ENCODE measurements at regions of chr1 and their contacts with region 1.

Region 1: GRCh38 chr1:6082430-6082971 is 36.8 kb downstream of the KCNAB2 start:
- DNase-seq: no peak
- H3K4me3 ChIP-seq: no peak overlapping the region
- H3K27ac ChIP-seq: no peak overlapping the region
- H3K4me1 ChIP-seq: peaks cover 0 to 5% (median 2%) of the 10 kb centered on the region in 4 experiments; a peak in 3 of 7 replicates
- H3K27me3 ChIP-seq: 0 out of 7 replicates have a peak, but pooled peaks cover 0 to 2% (median 0%) of the 10 kb centered on the region in 4 experiments
- CTCF ChIP-seq: peak; percentile 44 to 55 (median 55)
- EP300 ChIP-seq: no peak
- POLR2A ChIP-seq: no peak
- RAD21 ChIP-seq: peak; percentile 30 to 46; a peak in 3 of 4 replicates

Region 2: GRCh38 chr1:6097824-6098223 is 15.3 kb after region 1 on chr1:
- CTCF ChIA-PET with region 1: interaction called, 31 read pairs
- POLR2A ChIA-PET with region 1: interaction called, 3 read pairs
- DNase-seq: no peak
- H3K4me3 ChIP-seq: no peak overlapping the region
- H3K27ac ChIP-seq: no peak overlapping the region
- H3K4me1 ChIP-seq: no peaks in the 10 kb centered on the region; a peak in 2 of 7 replicates
- H3K27me3 ChIP-seq: no peaks in the 10 kb centered on the region
- CTCF ChIP-seq: no peak
- EP300 ChIP-seq: no peak
- POLR2A ChIP-seq: no peak
- RAD21 ChIP-seq: no peak

Region 3: DNA sequence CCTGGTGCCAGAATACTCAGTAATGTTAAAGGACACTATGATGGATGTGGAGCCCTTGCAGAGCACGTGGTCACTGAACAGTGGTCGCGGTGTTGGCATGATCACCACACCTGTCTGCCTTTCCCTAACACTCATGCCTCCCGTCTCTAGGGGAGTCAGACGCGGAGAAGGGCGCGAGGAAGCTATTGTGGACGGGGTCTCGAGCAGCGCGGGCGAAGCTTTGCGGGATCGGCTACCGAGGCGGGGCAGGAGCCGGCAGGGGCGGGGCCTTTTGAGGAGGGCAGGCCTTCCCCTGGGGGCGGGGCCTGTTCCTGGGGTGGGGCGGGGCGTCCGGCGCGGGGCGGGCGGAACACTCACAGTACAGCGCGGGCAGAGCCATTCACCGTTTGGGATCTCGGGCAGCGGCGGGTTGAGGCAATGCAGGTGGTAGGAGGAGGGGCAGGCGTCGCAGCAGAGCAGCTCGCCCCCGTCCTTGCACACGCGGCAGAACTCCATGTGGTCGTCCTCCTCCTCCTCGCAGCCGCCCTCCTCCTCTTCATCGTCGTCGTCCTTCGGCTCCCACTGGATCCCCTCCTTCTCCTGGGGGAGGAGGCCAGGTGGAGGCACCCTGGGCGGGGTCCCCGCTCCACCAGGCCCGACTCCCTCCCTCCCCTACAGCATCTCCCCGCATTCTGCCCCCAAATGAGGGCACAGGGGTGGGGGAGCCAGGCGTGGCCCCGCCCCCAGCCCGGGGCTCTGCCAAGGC is 66.2 kb after region 1 on chr1:
- CTCF ChIA-PET with region 1: no interaction called
- POLR2A ChIA-PET with region 1: no interaction called
- DNase-seq: peak; percentile 66 to 93
- H3K4me3 ChIP-seq: peak overlapping the region; percentile 6 to 53 (median 24); a peak in 5 of 8 replicates
- H3K27ac ChIP-seq: no peak overlapping the region
- H3K4me1 ChIP-seq: peaks cover 0 to 18% (median 4%) of the 10 kb centered on the region in 4 experiments; a peak in 4 of 7 replicates
- H3K27me3 ChIP-seq: peaks cover 4 to 26% (median 21%) of the 10 kb centered on the region in 4 experiments
- CTCF ChIP-seq: no peak
- EP300 ChIP-seq: no peak
- POLR2A ChIP-seq: no peak
- RAD21 ChIP-seq: no peak

Region 4: GRCh38 chr1:6171548-6172119 is 89.1 kb after region 1 on chr1:
- CTCF ChIA-PET with region 1: interaction called, 15 read pairs
- POLR2A ChIA-PET with region 1: no interaction called
- DNase-seq: no peak
- H3K4me3 ChIP-seq: no peak overlapping the region
- H3K27ac ChIP-seq: no peak overlapping the region
- H3K4me1 ChIP-seq: no peaks in the 10 kb centered on the region; a peak in 1 of 7 replicates
- H3K27me3 ChIP-seq: peaks cover 0 to 8% (median 1%) of the 10 kb centered on the region in 4 experiments; a peak in 2 of 7 replicates
- CTCF ChIP-seq: peak in 2 of 3 experiments; percentile 74 to 77; a peak in 3 of 4 replicates
- EP300 ChIP-seq: no peak
- POLR2A ChIP-seq: no peak
- RAD21 ChIP-seq: peak; percentile 67 to 79